ENCODE measurements at regions of chr10 and their contacts with region 1.

Region 1: DNA sequence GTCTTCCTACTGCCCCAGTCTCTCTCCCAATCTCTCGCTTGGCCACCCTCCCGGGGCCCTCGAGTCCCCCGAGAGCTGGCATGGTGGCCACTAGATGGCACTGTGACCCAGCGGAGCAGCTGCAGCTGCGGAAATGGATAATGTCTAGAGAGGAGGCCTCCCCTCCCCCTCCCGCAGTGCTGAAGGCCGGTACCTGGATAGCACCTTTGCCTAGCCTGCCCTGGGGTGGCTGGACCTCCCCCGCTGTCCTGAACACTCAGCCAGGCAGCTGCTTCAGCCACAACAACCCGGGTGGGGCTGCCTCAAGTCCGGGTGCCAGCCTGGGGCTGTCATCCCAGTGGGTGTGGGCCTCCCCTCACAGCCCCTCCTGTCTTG is 65.2 kb downstream of the GOLGA7B start:
- DNase-seq: peak; percentile 83
- H3K27ac ChIP-seq: no peak overlapping the region
- CTCF ChIP-seq: peak; percentile 92

Region 2: GRCh38 chr10:97903128-97904017 is 11.5 kb before region 1 on chr10:
- CTCF ChIA-PET with region 1: interaction called, 15 read pairs
- POLR2A ChIA-PET with region 1: no interaction called
- DNase-seq: no peak
- H3K27ac ChIP-seq: no peak overlapping the region
- CTCF ChIP-seq: no peak

Measured in RWPE1 (cell line).